T-cell (primary cell): ENCODE measurements at regions of chr4 and their contacts with region 1.

Region 1: GRCh38 chr4:56435306-56435926 is at the start of gene PPAT:
- DNase-seq: peak; percentile 95 to 100 (median 98)
- ATAC-seq: peak; percentile 80 to 87 (median 83)
- H3K4me3 ChIP-seq: peak within 1 kb of the TSS; percentile 88 to 94
- H3K4me3 Mint-ChIP-seq: peak within 1 kb of the TSS; percentile 89 to 93 (median 90)
- H3K27ac ChIP-seq: peak within 1 kb of the TSS; percentile 86
- H3K27ac Mint-ChIP-seq: peak within 1 kb of the TSS; percentile 97 to 98
- H3K4me1 ChIP-seq: peaks cover 16 to 24% of the 10 kb centered on the region in 2 experiments
- H3K4me1 Mint-ChIP-seq: peaks cover 41 to 55% (median 46%) of the 10 kb centered on the region in 3 donors
- H3K27me3 ChIP-seq: no peaks in the 10 kb centered on the region
- H3K27me3 Mint-ChIP-seq: no peaks in the 10 kb centered on the region
- total RNA-seq, gene PPAT: 10.5 to 15.1 (median 12.5) TPM

Region 2: GRCh38 chr4:55089916-55090315 is 1345.5 kb before region 1 on chr4:
- CTCF ChIA-PET with region 1: no interaction called
- POLR2A ChIA-PET with region 1: interaction called in 1 of 2 experiments, 15 read pairs
- DNase-seq: no peak
- ATAC-seq: no peak
- H3K4me3 ChIP-seq: no peak overlapping the region
- H3K4me3 Mint-ChIP-seq: no peak overlapping the region
- H3K27ac ChIP-seq: no peak overlapping the region
- H3K27ac Mint-ChIP-seq: no peak overlapping the region
- H3K4me1 ChIP-seq: no peaks in the 10 kb centered on the region
- H3K4me1 Mint-ChIP-seq: no peaks in the 10 kb centered on the region
- H3K27me3 ChIP-seq: no peaks in the 10 kb centered on the region
- H3K27me3 Mint-ChIP-seq: peaks cover 0 to 8% of the 10 kb centered on the region in 2 donors

Region 3: DNA sequence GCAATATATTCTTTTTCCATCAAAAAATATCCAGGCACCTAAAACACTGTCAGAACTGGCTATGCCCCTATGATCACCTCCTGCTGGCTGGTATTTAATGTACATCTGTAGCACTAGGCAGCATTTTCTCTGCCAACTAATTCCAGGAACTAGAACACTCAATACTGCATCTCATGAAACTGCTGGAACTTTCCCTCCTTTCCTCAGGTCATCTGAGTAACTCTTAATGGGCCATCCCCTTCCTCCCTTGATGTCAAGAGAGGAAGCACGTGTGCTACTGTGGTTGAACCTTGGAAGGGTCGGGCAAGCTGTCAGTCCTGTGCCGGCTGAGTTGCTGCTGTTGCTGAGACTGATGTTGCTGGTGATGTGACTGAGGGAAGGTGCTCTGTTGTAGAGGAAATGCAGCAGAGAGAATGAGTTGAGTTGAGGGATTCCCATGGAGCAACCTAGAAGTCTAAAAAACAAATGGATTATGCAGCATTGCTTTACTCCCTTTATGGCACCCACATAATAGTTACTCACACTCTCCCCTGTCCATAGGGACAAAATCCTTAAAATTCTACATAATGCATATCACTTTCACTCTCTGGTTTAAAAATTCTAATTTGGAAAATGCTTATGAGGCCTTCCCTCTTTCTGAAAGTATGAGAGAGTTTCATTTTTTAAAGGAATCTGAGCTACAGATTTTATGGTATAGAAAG is 1000.1 kb before region 1 on chr4:
- CTCF ChIA-PET with region 1: no interaction called
- POLR2A ChIA-PET with region 1: no interaction called
- DNase-seq: peak in 3 of 35 experiments; percentile 1 to 17 (median 6)
- ATAC-seq: peak; percentile 58 to 70 (median 67)
- H3K4me3 ChIP-seq: no peak overlapping the region
- H3K4me3 Mint-ChIP-seq: no peak overlapping the region
- H3K27ac ChIP-seq: peak overlapping the region; percentile 36
- H3K27ac Mint-ChIP-seq: peak overlapping the region; percentile 59 to 61
- H3K4me1 ChIP-seq: peaks cover 3 to 7% of the 10 kb centered on the region in 2 experiments
- H3K4me1 Mint-ChIP-seq: peaks cover 10 to 19% (median 14%) of the 10 kb centered on the region in 3 donors
- H3K27me3 ChIP-seq: no peaks in the 10 kb centered on the region
- H3K27me3 Mint-ChIP-seq: no peaks in the 10 kb centered on the region

Region 4: GRCh38 chr4:55948726-55949474 is 486.5 kb before region 1 on chr4 and contains the start of gene CEP135:
- CTCF ChIA-PET with region 1: interaction called in 1 of 2 experiments, 14 read pairs
- POLR2A ChIA-PET with region 1: no interaction called
- DNase-seq: peak; percentile 81 to 95 (median 88)
- ATAC-seq: peak; percentile 71 to 83 (median 80)
- H3K4me3 ChIP-seq: peak within 1 kb of the TSS; percentile 76 to 83
- H3K4me3 Mint-ChIP-seq: peak within 1 kb of the TSS; percentile 86 to 95 (median 90)
- H3K27ac ChIP-seq: peak within 1 kb of the TSS; percentile 80
- H3K27ac Mint-ChIP-seq: peak within 1 kb of the TSS; percentile 89 to 94
- H3K4me1 ChIP-seq: peaks cover 6 to 20% of the 10 kb centered on the region in 2 experiments
- H3K4me1 Mint-ChIP-seq: peaks cover 51 to 57% (median 52%) of the 10 kb centered on the region in 3 donors
- H3K27me3 ChIP-seq: no peaks in the 10 kb centered on the region
- H3K27me3 Mint-ChIP-seq: no peaks in the 10 kb centered on the region
- total RNA-seq, gene CEP135: 17.3 to 24.5 (median 21.7) TPM

Region 5: DNA sequence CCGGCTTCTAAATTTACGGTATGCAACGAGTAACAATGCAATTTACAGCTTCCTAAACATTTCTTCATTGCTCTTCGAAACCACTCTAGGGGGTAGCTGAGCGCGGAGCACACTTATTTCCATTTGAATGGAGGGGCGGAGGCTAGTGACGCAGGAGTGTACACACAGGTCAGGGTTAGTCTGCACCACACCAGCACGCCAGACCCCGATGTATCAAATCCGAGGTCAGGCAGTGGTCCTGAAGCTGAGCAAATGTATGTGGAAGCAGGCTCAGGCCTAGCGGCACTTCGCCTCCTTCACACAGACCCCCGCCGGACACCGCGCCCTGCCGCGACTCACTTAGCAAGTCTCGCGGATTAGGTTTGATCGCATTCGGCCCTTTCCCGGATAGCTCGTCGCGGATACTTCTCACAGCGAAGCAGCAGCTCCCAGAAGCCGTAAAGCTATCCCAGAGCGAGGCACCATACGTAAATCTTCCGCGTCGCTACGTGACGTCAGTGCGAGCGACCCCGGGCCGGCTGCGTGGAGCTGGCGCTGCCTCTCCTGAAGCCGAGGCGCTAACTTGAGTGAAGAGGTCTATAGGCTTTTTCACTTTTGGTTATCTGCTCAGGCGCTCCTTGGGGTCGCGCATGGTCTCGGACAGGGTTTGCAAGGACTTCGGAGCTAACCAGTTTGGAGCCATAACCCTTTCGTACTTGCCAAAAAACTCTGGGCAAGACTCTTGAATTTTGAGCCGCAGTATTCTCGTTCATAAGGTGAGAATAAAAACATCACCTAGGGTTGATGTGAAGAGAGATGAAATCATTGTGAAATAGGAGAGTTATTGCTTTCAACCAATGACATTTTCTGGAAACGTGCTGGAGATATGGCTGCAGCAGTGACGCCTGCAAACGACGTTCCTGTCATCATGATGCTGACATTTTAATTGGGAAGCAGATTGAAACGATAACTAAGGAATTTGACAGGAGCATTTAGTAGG is 48.1 kb before region 1 on chr4 and contains the start of gene AASDH:
- CTCF ChIA-PET with region 1: interaction called in 1 of 2 experiments, 27 read pairs
- POLR2A ChIA-PET with region 1: interaction called, 8 to 37 read pairs
- DNase-seq: peak; percentile 90 to 98 (median 94)
- ATAC-seq: peak; percentile 88 to 92 (median 89)
- H3K4me3 ChIP-seq: peak within 1 kb of the TSS; percentile 76 to 95
- H3K4me3 Mint-ChIP-seq: peak within 1 kb of the TSS; percentile 88 to 98 (median 91)
- H3K27ac ChIP-seq: peak within 1 kb of the TSS; percentile 97
- H3K27ac Mint-ChIP-seq: peak within 1 kb of the TSS; percentile 95 to 99
- H3K4me1 ChIP-seq: peaks cover 11 to 15% of the 10 kb centered on the region in 2 experiments
- H3K4me1 Mint-ChIP-seq: peaks cover 40 to 56% (median 52%) of the 10 kb centered on the region in 3 donors
- H3K27me3 ChIP-seq: no peaks in the 10 kb centered on the region
- H3K27me3 Mint-ChIP-seq: no peaks in the 10 kb centered on the region
- total RNA-seq, gene AASDH: 13.3 to 17.7 (median 16.0) TPM

Region 6: GRCh38 chr4:56416349-56416748 is 19.1 kb before region 1 on chr4:
- CTCF ChIA-PET with region 1: no interaction called
- POLR2A ChIA-PET with region 1: no interaction called
- DNase-seq: no peak
- ATAC-seq: no peak
- H3K4me3 ChIP-seq: no peak overlapping the region
- H3K4me3 Mint-ChIP-seq: no peak overlapping the region
- H3K27ac ChIP-seq: no peak overlapping the region
- H3K27ac Mint-ChIP-seq: no peak overlapping the region
- H3K4me1 ChIP-seq: no peaks in the 10 kb centered on the region
- H3K4me1 Mint-ChIP-seq: peaks cover 0 to 19% (median 2%) of the 10 kb centered on the region in 3 donors
- H3K27me3 ChIP-seq: no peaks in the 10 kb centered on the region
- H3K27me3 Mint-ChIP-seq: no peaks in the 10 kb centered on the region

Region 7: DNA sequence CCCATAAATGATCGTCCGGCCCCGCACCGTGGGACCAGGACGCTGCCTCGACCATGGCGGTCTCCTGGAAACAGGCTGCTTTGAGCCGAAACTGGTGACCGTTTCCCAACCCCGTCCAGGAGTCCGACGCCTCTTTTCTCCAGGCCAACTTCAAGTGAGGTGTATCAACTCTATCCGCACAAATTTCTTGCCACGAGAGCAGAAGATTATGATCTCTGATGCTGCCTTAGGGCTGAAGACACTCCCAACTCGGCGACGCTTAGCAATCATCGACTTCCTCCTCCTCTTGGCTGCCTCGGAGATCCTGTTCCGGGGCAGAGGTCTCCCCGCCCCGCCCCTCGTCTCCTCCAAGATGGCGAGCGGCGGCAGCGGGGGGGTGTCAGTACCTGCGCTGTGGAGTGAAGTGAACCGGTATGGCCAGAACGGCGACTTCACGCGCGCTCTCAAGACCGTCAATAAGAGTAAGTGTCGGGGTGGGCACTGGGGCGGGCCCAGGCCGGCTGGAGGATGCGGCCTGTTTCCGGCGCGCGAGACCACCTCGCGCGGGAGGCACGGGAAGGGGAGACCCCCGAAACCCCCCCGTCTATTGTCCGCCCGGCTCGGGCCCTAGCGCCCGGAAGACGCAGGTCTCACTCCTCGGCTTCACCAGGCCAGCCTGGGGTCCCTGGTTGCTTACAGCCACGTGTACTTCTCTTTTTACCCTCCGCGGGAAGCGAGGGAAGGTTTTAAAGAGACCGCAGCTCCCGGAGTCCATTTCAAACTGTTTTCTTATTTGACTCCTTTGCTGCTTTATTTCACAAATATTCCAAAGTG is 32.1 kb after region 1 on chr4 and contains the start of gene SRP72:
- CTCF ChIA-PET with region 1: interaction called, 4 to 21 read pairs
- POLR2A ChIA-PET with region 1: interaction called, 9 to 15 read pairs
- DNase-seq: peak; percentile 71 to 96 (median 92)
- ATAC-seq: peak; percentile 97 to 98 (median 98)
- H3K4me3 ChIP-seq: peak within 1 kb of the TSS; percentile 90 to 99
- H3K4me3 Mint-ChIP-seq: peak within 1 kb of the TSS; percentile 97 to 100 (median 98)
- H3K27ac ChIP-seq: peak within 1 kb of the TSS; percentile 84
- H3K27ac Mint-ChIP-seq: peak within 1 kb of the TSS; percentile 96 to 99
- H3K4me1 ChIP-seq: peaks cover 23 to 38% of the 10 kb centered on the region in 2 experiments
- H3K4me1 Mint-ChIP-seq: peaks cover 62 to 65% (median 64%) of the 10 kb centered on the region in 3 donors
- H3K27me3 ChIP-seq: no peaks in the 10 kb centered on the region
- H3K27me3 Mint-ChIP-seq: no peaks in the 10 kb centered on the region
- total RNA-seq, gene SRP72: 98.0 to 115 (median 107) TPM

Region 8: DNA sequence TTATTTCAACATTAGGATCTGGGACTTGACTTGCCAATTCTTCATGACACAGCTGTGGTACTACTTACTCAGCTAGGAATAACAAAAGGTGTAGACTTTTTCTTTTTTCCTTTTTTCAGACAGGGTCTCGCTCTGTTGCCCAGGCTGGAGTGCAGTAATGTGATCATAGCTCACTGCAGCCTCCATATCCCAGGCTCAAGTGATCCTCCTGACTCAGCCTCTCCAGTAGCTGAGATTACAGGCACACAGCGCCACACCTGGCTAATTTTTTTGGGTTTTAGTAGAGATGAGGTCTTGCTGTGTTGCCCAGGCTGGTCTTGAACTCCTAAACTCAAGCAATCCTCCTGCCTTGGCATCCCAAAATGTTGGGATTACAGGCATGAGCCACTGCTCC is 525.7 kb after region 1 on chr4:
- CTCF ChIA-PET with region 1: no interaction called
- POLR2A ChIA-PET with region 1: no interaction called
- DNase-seq: no peak
- ATAC-seq: no peak
- H3K4me3 ChIP-seq: no peak overlapping the region
- H3K4me3 Mint-ChIP-seq: no peak overlapping the region
- H3K27ac ChIP-seq: no peak overlapping the region
- H3K27ac Mint-ChIP-seq: no peak overlapping the region
- H3K4me1 ChIP-seq: no peaks in the 10 kb centered on the region
- H3K4me1 Mint-ChIP-seq: no peaks in the 10 kb centered on the region
- H3K27me3 ChIP-seq: no peaks in the 10 kb centered on the region
- H3K27me3 Mint-ChIP-seq: no peaks in the 10 kb centered on the region

Region 9: GRCh38 chr4:56977321-56978012 is 542.1 kb after region 1 on chr4 and contains the start of gene NOA1:
- CTCF ChIA-PET with region 1: interaction called in 1 of 2 experiments, 17 read pairs
- POLR2A ChIA-PET with region 1: interaction called in 1 of 2 experiments, 12 read pairs
- DNase-seq: peak; percentile 93 to 100 (median 96)
- ATAC-seq: peak; percentile 76 to 81 (median 80)
- H3K4me3 ChIP-seq: peak within 1 kb of the TSS; percentile 98 to 99
- H3K4me3 Mint-ChIP-seq: peak within 1 kb of the TSS; percentile 100
- H3K27ac ChIP-seq: peak within 1 kb of the TSS; percentile 80
- H3K27ac Mint-ChIP-seq: peak within 1 kb of the TSS; percentile 98
- H3K4me1 ChIP-seq: peaks cover 22 to 52% of the 10 kb centered on the region in 2 experiments
- H3K4me1 Mint-ChIP-seq: peaks cover 65 to 74% (median 68%) of the 10 kb centered on the region in 3 donors
- H3K27me3 ChIP-seq: no peaks in the 10 kb centered on the region
- H3K27me3 Mint-ChIP-seq: no peaks in the 10 kb centered on the region
- total RNA-seq, gene NOA1: 15.2 to 27.2 (median 22.1) TPM

Region 10: GRCh38 chr4:57501720-57502119 is 1066.3 kb after region 1 on chr4:
- CTCF ChIA-PET with region 1: no interaction called
- POLR2A ChIA-PET with region 1: no interaction called
- DNase-seq: no peak
- ATAC-seq: no peak
- H3K4me3 ChIP-seq: no peak overlapping the region
- H3K4me3 Mint-ChIP-seq: no peak overlapping the region
- H3K27ac ChIP-seq: no peak overlapping the region
- H3K27ac Mint-ChIP-seq: no peak overlapping the region
- H3K4me1 ChIP-seq: no peaks in the 10 kb centered on the region
- H3K4me1 Mint-ChIP-seq: no peaks in the 10 kb centered on the region
- H3K27me3 ChIP-seq: no peaks in the 10 kb centered on the region
- H3K27me3 Mint-ChIP-seq: no peaks in the 10 kb centered on the region